ENCODE measurements at regions of chr17 and their contacts with region 1.

Region 1: GRCh38 chr17:35856603-35857002 is 12.1 kb downstream of the HEATR9 start:
- DNase-seq: peak; percentile 56
- ATAC-seq: peak; percentile 87
- H3K4me3 Mint-ChIP-seq: no peak overlapping the region
- H3K27ac Mint-ChIP-seq: peak overlapping the region; percentile 62
- H3K4me1 Mint-ChIP-seq: peaks cover 28% of the 10 kb centered on the region
- H3K27me3 Mint-ChIP-seq: no peaks in the 10 kb centered on the region

Region 2: GRCh38 chr17:35700150-35700549 is 156.5 kb before region 1 on chr17:
- CTCF ChIA-PET with region 1: no interaction called
- DNase-seq: no peak
- ATAC-seq: no peak
- H3K4me3 Mint-ChIP-seq: no peak overlapping the region
- H3K27ac Mint-ChIP-seq: no peak overlapping the region
- H3K4me1 Mint-ChIP-seq: peaks cover 4% of the 10 kb centered on the region
- H3K27me3 Mint-ChIP-seq: no peaks in the 10 kb centered on the region

Region 3: GRCh38 chr17:35825206-35825605 is 31.4 kb before region 1 on chr17:
- CTCF ChIA-PET with region 1: no interaction called
- DNase-seq: no peak
- ATAC-seq: no peak
- H3K4me3 Mint-ChIP-seq: no peak overlapping the region
- H3K27ac Mint-ChIP-seq: no peak overlapping the region
- H3K4me1 Mint-ChIP-seq: peaks cover 5% of the 10 kb centered on the region
- H3K27me3 Mint-ChIP-seq: no peaks in the 10 kb centered on the region

Region 4: GRCh38 chr17:35870906-35871819 is 14.6 kb after region 1 on chr17:
- CTCF ChIA-PET with region 1: interaction called, 14 read pairs
- DNase-seq: peak; percentile 60
- ATAC-seq: peak; percentile 12
- H3K4me3 Mint-ChIP-seq: no peak overlapping the region
- H3K27ac Mint-ChIP-seq: peak overlapping the region; percentile 67
- H3K4me1 Mint-ChIP-seq: peaks cover 59% of the 10 kb centered on the region
- H3K27me3 Mint-ChIP-seq: no peaks in the 10 kb centered on the region